ENCODE measurements at regions of chr5 and their contacts with region 1.

Region 1: GRCh38 chr5:89232139-89232603 is 349.2 kb upstream of the MEF2C start:
- DNase-seq: peak; percentile 34
- CTCF ChIP-seq: no peak

Region 2: DNA sequence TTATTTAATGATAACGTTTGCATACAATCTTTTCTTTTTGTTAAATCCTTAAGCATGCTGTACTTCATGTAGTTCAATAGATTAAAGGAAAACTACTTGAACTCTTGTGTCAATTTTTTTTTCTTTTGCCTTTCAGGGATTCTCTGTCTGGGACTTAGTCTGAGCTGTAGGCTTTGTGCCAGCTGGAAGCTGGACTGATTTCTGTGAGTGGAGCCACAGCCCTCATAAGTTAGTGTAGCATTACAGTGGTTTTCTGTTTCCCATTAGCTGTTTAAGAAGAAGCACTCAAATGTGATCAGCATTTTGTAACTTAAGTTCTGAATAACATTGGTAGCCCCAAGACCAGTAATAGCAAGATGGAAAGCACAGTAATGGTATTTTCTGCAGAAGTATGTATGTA is 18.6 kb before region 1 on chr5:
- CTCF ChIA-PET with region 1: no interaction called
- POLR2A ChIA-PET with region 1: no interaction called
- DNase-seq: no peak
- CTCF ChIP-seq: no peak

Region 3: DNA sequence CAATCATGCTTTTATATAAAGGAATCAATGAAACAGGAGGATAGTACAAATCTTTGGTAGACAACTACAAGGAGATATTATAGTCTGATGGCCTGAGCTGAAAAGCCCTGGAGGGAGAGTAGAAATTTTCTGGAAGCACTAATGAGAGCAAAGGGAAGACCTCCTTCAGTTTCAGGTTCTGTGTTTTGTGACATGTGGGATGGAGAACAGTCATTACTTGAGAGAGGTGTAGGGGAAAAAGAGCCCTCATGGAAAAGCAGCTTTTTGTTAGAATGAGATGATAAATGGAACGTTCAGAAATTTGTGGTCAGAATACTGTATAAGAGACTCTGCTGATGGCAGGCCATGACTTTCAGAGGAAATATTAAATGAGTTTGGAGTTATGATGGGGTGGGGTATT is 11.4 kb after region 1 on chr5:
- CTCF ChIA-PET with region 1: interaction called, 20 read pairs
- POLR2A ChIA-PET with region 1: no interaction called
- DNase-seq: no peak
- CTCF ChIP-seq: no peak

Measured in GM10248 (cell line).